OCI-LY7 (cell line): ENCODE measurements at regions of chr3 and their contacts with region 1.

Region 1: GRCh38 chr3:18389108-18389733 is 35.9 kb downstream of the SATB1 start:
- DNase-seq: peak; percentile 62
- H3K4me3 ChIP-seq: no peak overlapping the region
- H3K27ac ChIP-seq: no peak overlapping the region
- H3K4me1 ChIP-seq: no peaks in the 10 kb centered on the region
- CTCF ChIP-seq: peak; percentile 96

Region 2: GRCh38 chr3:17894434-17895060 is 494.7 kb before region 1 on chr3:
- CTCF ChIA-PET with region 1: no interaction called
- POLR2A ChIA-PET with region 1: no interaction called
- intact Hi-C with region 1: loop called (anchors 1 kb)
- DNase-seq: peak; percentile 76
- H3K4me3 ChIP-seq: no peak overlapping the region
- H3K27ac ChIP-seq: no peak overlapping the region
- H3K4me1 ChIP-seq: no peaks in the 10 kb centered on the region
- CTCF ChIP-seq: peak; percentile 86

Region 3: GRCh38 chr3:18179521-18179920 is 209.7 kb before region 1 on chr3:
- CTCF ChIA-PET with region 1: no interaction called
- POLR2A ChIA-PET with region 1: no interaction called
- intact Hi-C with region 1: loop called (anchors 10 kb)
- DNase-seq: no peak
- H3K4me3 ChIP-seq: no peak overlapping the region
- H3K27ac ChIP-seq: no peak overlapping the region
- H3K4me1 ChIP-seq: no peaks in the 10 kb centered on the region
- CTCF ChIP-seq: no peak

Region 4: DNA sequence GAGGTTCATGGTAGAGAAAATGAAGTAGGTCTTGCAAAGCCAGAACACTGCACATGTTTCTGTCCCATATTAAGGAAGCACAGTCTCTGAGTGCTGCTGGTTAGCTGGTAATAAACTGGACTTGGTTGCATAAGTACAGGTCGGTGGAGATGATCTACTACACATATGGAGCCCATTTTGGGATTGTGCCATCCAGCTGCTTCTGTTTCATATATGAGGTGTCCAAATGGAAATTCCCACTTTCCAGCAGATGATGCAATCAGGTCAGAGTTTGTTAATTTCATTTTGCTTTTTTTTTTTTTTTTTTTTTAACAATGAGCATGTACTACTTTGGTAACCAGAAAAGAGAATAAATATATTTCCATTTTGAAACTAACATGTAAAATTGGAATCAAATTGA is 86.7 kb before region 1 on chr3:
- CTCF ChIA-PET with region 1: no interaction called
- POLR2A ChIA-PET with region 1: no interaction called
- intact Hi-C with region 1: loop called (anchors 5 kb)
- DNase-seq: no peak
- H3K4me3 ChIP-seq: no peak overlapping the region
- H3K27ac ChIP-seq: no peak overlapping the region
- H3K4me1 ChIP-seq: peaks cover 7% of the 10 kb centered on the region
- CTCF ChIP-seq: no peak

Region 5: GRCh38 chr3:19083808-19084207 is 694.6 kb after region 1 on chr3:
- CTCF ChIA-PET with region 1: no interaction called
- POLR2A ChIA-PET with region 1: no interaction called
- intact Hi-C with region 1: no loop called
- DNase-seq: no peak
- H3K4me3 ChIP-seq: no peak overlapping the region
- H3K27ac ChIP-seq: no peak overlapping the region
- H3K4me1 ChIP-seq: no peaks in the 10 kb centered on the region
- CTCF ChIP-seq: no peak